CD4-positive, alpha-beta memory T cell (primary cell): ENCODE measurements at regions of chr16 and their contacts with region 1.

Region 1: DNA sequence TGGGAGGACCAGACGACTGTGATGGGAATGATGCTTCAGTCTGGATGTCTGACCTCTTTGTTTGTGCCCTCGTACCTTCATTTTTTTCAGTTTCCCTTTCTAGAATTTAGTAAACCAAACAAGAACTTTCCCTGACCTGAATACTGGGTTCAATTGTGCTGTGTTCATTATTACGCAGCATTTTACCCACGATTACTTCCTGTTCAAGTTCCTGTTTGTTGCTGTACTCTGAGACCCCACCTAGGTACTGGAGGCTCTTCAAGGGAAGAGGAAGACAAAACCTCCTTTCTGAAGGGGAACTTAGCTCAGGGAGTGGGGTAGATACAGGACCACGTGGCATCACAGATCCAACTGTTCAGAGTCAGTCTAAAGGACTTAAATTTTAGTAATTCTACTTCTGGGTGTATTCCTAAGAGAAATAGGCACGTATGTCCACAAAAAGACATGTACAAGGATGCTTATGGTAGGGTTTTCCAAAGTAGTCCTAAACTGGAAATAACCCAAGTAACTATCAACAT is 9.2 kb upstream of the PRKCB start:
- DNase-seq: peak; percentile 58 to 78 (median 73)
- H3K4me3 ChIP-seq: peak overlapping the region; percentile 0 to 20
- H3K4me3 Mint-ChIP-seq: peak overlapping the region; percentile 55 to 84 (median 65)
- H3K27ac ChIP-seq: peak overlapping the region; percentile 36
- H3K27ac Mint-ChIP-seq: peak overlapping the region; percentile 88 to 97 (median 89)
- H3K4me1 ChIP-seq: peaks cover 40% of the 10 kb centered on the region
- H3K4me1 Mint-ChIP-seq: peaks cover 30 to 44% (median 36%) of the 10 kb centered on the region in 4 donors
- H3K27me3 ChIP-seq: no peaks in the 10 kb centered on the region
- H3K27me3 Mint-ChIP-seq: no peaks in the 10 kb centered on the region

Region 2: GRCh38 chr16:23863511-23864422 is 37.2 kb after region 1 on chr16:
- CTCF ChIA-PET with region 1: no interaction called
- POLR2A ChIA-PET with region 1: interaction called, 7 read pairs
- intact Hi-C with region 1: loop called (anchors 5 kb)
- DNase-seq: peak; percentile 48 to 70 (median 62)
- H3K4me3 ChIP-seq: peak overlapping the region; percentile 48 to 71
- H3K4me3 Mint-ChIP-seq: peak overlapping the region; percentile 84 to 94 (median 90)
- H3K27ac ChIP-seq: peak overlapping the region; percentile 43
- H3K27ac Mint-ChIP-seq: peak overlapping the region; percentile 86 to 96 (median 88)
- H3K4me1 ChIP-seq: peaks cover 80% of the 10 kb centered on the region
- H3K4me1 Mint-ChIP-seq: peaks cover 59 to 88% (median 77%) of the 10 kb centered on the region in 4 donors
- H3K27me3 ChIP-seq: no peaks in the 10 kb centered on the region
- H3K27me3 Mint-ChIP-seq: no peaks in the 10 kb centered on the region